Activated naive CD4-positive, alpha-beta T cell treated with anti-CD3 and anti-CD28 coated beads, Interleukin-2, amount 10 ng/mL, durations not matched to agents 7 days and 5 days (primary cell): ENCODE measurements at regions of chr6 and their contacts with region 1.

Region 1: GRCh38 chr6:53437557-53438202 is 88.9 kb upstream of the ELOVL5 start:
- DNase-seq: peak; percentile 38
- H3K4me3 Mint-ChIP-seq: no peak overlapping the region
- H3K27ac Mint-ChIP-seq: no peak overlapping the region
- H3K4me1 Mint-ChIP-seq: no peaks in the 10 kb centered on the region
- H3K27me3 Mint-ChIP-seq: peaks cover 4% of the 10 kb centered on the region

Region 2: DNA sequence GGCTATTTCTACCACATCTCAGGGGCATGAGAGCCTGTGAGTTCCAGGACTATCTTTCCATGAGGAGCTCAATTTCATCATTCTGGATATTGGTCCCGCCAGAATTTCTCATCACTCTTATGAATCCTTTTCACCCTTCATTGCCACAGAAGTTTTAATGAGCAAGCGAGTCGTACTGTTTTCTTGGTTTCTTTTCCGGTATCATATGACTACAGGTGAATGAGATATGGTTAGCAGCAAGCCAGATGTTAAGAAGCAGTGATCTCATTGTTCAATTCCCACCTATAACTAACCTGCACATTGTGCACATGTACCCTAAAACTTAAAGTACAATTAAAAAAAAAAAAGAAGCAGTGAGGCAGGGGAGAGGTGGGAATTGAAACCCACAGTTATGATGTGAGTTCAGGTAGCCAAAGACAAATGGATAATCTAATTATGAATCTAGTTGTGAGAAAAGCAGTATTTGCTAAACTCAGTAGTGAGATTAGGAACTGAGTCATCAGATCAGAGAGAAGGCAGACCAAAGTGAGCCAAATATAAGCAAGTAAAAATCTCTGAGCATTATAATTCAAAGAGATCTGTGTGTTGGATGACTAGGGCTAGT is 10.9 kb before region 1 on chr6:
- CTCF ChIA-PET with region 1: interaction called, 16 read pairs
- DNase-seq: no peak
- H3K4me3 Mint-ChIP-seq: no peak overlapping the region
- H3K27ac Mint-ChIP-seq: no peak overlapping the region
- H3K4me1 Mint-ChIP-seq: peaks cover 6% of the 10 kb centered on the region
- H3K27me3 Mint-ChIP-seq: peaks cover 12% of the 10 kb centered on the region

Region 3: GRCh38 chr6:53573299-53573698 is 135.6 kb after region 1 on chr6:
- CTCF ChIA-PET with region 1: no interaction called
- DNase-seq: no peak
- H3K4me3 Mint-ChIP-seq: no peak overlapping the region
- H3K27ac Mint-ChIP-seq: no peak overlapping the region
- H3K4me1 Mint-ChIP-seq: no peaks in the 10 kb centered on the region
- H3K27me3 Mint-ChIP-seq: peaks cover 5% of the 10 kb centered on the region